CD4-positive, alpha-beta T cell (primary cell): ENCODE measurements at regions of chr17 and their contacts with region 1.

Region 1: GRCh38 chr17:44533533-44534246 is 23.6 kb upstream of the FZD2 start:
- DNase-seq: peak; percentile 70 to 89 (median 84)
- ATAC-seq: peak; percentile 96
- H3K4me3 ChIP-seq: no peak overlapping the region
- H3K4me3 Mint-ChIP-seq: no peak overlapping the region
- H3K27ac ChIP-seq: no peak overlapping the region
- H3K27ac Mint-ChIP-seq: no peak overlapping the region
- H3K4me1 ChIP-seq: peaks cover 8% of the 10 kb centered on the region
- H3K4me1 Mint-ChIP-seq: no peaks in the 10 kb centered on the region
- H3K27me3 ChIP-seq: no peaks in the 10 kb centered on the region
- H3K27me3 Mint-ChIP-seq: peaks cover 26% of the 10 kb centered on the region
- CTCF ChIP-seq: peak; percentile 86

Region 2: GRCh38 chr17:44417553-44417952 is 116.1 kb before region 1 on chr17:
- CTCF ChIA-PET with region 1: no interaction called
- POLR2A ChIA-PET with region 1: no interaction called
- intact Hi-C with region 1: no loop called
- DNase-seq: no peak
- ATAC-seq: no peak
- H3K4me3 ChIP-seq: no peak overlapping the region
- H3K4me3 Mint-ChIP-seq: no peak overlapping the region
- H3K27ac ChIP-seq: no peak overlapping the region
- H3K27ac Mint-ChIP-seq: no peak overlapping the region
- H3K4me1 ChIP-seq: no peaks in the 10 kb centered on the region
- H3K4me1 Mint-ChIP-seq: peaks cover 4% of the 10 kb centered on the region
- H3K27me3 ChIP-seq: no peaks in the 10 kb centered on the region
- H3K27me3 Mint-ChIP-seq: no peaks in the 10 kb centered on the region
- CTCF ChIP-seq: no peak

Region 3: GRCh38 chr17:44636562-44636961 is 102.9 kb after region 1 on chr17:
- CTCF ChIA-PET with region 1: no interaction called
- POLR2A ChIA-PET with region 1: no interaction called
- intact Hi-C with region 1: loop called (anchors 2 to 5 kb)
- DNase-seq: peak in 3 of 14 experiments; percentile 17 to 19 (median 19)
- ATAC-seq: no peak
- H3K4me3 ChIP-seq: no peak overlapping the region
- H3K4me3 Mint-ChIP-seq: no peak overlapping the region
- H3K27ac ChIP-seq: no peak overlapping the region
- H3K27ac Mint-ChIP-seq: no peak overlapping the region
- H3K4me1 ChIP-seq: no peaks in the 10 kb centered on the region
- H3K4me1 Mint-ChIP-seq: no peaks in the 10 kb centered on the region
- H3K27me3 ChIP-seq: peaks cover 3 to 12% of the 10 kb centered on the region in 2 experiments
- H3K27me3 Mint-ChIP-seq: peaks cover 39% of the 10 kb centered on the region
- CTCF ChIP-seq: no peak

Region 4: DNA sequence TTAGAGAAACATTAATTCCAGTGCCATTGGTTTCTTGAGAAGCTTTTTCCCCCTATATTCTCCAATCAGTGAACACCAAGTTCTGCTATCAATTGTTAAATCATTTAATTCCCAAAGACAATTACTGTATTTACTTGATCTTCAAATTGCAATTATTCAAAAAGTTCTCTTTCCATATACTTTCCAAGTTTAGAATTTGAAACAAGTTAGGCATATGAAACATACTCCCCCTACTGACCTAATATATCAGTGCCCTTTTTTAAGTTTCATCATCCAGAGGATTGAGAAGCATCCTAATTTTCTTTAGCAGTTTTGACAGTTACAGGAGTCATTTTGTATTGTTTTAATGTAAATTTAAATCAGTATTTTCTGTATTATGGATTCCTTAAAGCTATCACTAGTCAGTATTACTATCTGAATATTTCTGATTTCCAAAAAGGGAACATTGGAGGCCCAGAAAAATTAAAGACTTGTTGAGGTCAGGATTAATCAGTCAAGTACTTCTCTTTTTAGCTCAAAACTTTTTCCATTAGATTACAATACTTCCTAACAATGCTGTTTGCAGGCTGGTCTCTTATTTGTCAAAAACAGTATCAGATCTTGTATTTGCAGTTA is 138.9 kb after region 1 on chr17:
- CTCF ChIA-PET with region 1: no interaction called
- POLR2A ChIA-PET with region 1: no interaction called
- intact Hi-C with region 1: loop called in 1 of 2 experiments (anchors 5 kb)
- DNase-seq: peak in 1 of 14 experiments; percentile 9
- ATAC-seq: no peak
- H3K4me3 ChIP-seq: no peak overlapping the region
- H3K4me3 Mint-ChIP-seq: no peak overlapping the region
- H3K27ac ChIP-seq: no peak overlapping the region
- H3K27ac Mint-ChIP-seq: no peak overlapping the region
- H3K4me1 ChIP-seq: no peaks in the 10 kb centered on the region
- H3K4me1 Mint-ChIP-seq: no peaks in the 10 kb centered on the region
- H3K27me3 ChIP-seq: no peaks in the 10 kb centered on the region
- H3K27me3 Mint-ChIP-seq: no peaks in the 10 kb centered on the region
- CTCF ChIP-seq: peak; percentile 36

Region 5: GRCh38 chr17:44864866-44865660 is 331.4 kb after region 1 on chr17:
- CTCF ChIA-PET with region 1: no interaction called
- POLR2A ChIA-PET with region 1: no interaction called
- intact Hi-C with region 1: loop called (anchors 1 to 10 kb)
- DNase-seq: peak; percentile 44 to 88 (median 62)
- ATAC-seq: peak; percentile 80
- H3K4me3 ChIP-seq: no peak overlapping the region
- H3K4me3 Mint-ChIP-seq: no peak overlapping the region
- H3K27ac ChIP-seq: no peak overlapping the region
- H3K27ac Mint-ChIP-seq: no peak overlapping the region
- H3K4me1 ChIP-seq: no peaks in the 10 kb centered on the region
- H3K4me1 Mint-ChIP-seq: no peaks in the 10 kb centered on the region
- H3K27me3 ChIP-seq: no peaks in the 10 kb centered on the region
- H3K27me3 Mint-ChIP-seq: no peaks in the 10 kb centered on the region
- CTCF ChIP-seq: peak; percentile 85